ENCODE measurements at regions of chr4 and their contacts with region 1.

Region 1: GRCh38 chr4:986879-987623 is at the start of gene IDUA:
- DNase-seq: peak; percentile 48
- H3K4me3 ChIP-seq: peak within 1 kb of the TSS; percentile 65 to 77 (median 66)
- H3K27ac ChIP-seq: peak within 1 kb of the TSS; percentile 24
- H3K4me1 ChIP-seq: peaks cover 26% of the 10 kb centered on the region
- H3K27me3 ChIP-seq: no peaks in the 10 kb centered on the region
- CTCF ChIP-seq: peak; percentile 2 to 54
- total RNA-seq, gene IDUA: 17.8 to 30.8 TPM

Region 2: GRCh38 chr4:742742-743311 is 244.2 kb before region 1 on chr4:
- CTCF ChIA-PET with region 1: interaction called, 5 read pairs
- dilution Hi-C with region 1: no loop called
- in situ Hi-C with region 1: no loop called
- intact Hi-C with region 1: loop called (anchors 2 kb)
- DNase-seq: peak; percentile 40
- H3K4me3 ChIP-seq: no peak overlapping the region
- H3K27ac ChIP-seq: no peak overlapping the region
- H3K4me1 ChIP-seq: no peaks in the 10 kb centered on the region
- H3K27me3 ChIP-seq: no peaks in the 10 kb centered on the region
- CTCF ChIP-seq: peak; percentile 71 to 88

Region 3: DNA sequence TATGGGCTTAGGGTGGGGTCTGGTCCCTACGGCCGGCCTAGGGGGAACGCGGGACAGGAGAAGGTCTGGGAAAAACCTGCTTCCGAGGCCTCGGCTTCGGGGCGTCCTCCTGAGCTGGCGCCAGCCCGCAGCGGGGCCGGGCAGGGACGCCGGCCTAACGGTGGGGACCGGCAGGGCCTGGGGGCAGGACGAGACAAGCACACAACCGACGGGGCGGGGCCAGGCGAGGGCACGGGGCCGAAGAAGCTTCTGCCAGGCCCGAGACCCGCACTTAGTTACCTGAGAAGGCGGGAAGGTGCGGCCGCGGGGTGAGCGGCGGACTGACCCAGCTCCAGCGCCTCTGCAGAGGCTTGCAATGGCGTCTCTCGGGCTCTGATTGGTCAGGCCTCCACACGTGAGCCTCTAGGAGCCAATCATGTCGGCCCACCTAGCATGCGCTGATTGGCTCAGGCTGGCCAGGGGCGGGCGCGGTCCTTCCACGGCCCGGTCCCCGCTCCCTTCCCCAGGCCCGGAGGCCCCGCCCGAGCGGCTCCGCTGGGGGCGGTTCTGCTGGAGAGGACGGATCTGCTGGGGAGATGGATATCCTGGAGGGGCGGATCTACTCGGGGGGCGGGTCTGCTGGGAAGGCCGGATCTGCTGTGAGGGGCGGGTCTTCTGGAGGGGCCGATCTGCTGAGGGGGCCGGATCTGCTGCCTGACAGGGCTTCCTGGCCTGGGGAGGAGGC is 205.4 kb before region 1 on chr4:
- CTCF ChIA-PET with region 1: interaction called, 5 read pairs
- dilution Hi-C with region 1: no loop called
- in situ Hi-C with region 1: loop called in 1 of 2 experiments (anchors 25 kb)
- intact Hi-C with region 1: no loop called
- DNase-seq: peak; percentile 100
- H3K4me3 ChIP-seq: peak overlapping the region; percentile 77 to 92 (median 91)
- H3K27ac ChIP-seq: peak overlapping the region; percentile 80
- H3K4me1 ChIP-seq: peaks cover 17% of the 10 kb centered on the region
- H3K27me3 ChIP-seq: peaks cover under 1% of the 10 kb centered on the region
- CTCF ChIP-seq: no peak

Region 4: GRCh38 chr4:891747-892146 is 95.3 kb before region 1 on chr4:
- CTCF ChIA-PET with region 1: no interaction called
- dilution Hi-C with region 1: no loop called
- in situ Hi-C with region 1: no loop called
- intact Hi-C with region 1: loop called (anchors 5 kb)
- DNase-seq: no peak
- H3K4me3 ChIP-seq: no peak overlapping the region
- H3K27ac ChIP-seq: no peak overlapping the region
- H3K4me1 ChIP-seq: no peaks in the 10 kb centered on the region
- H3K27me3 ChIP-seq: no peaks in the 10 kb centered on the region
- CTCF ChIP-seq: peak in 1 of 2 donors; percentile 28

Region 5: DNA sequence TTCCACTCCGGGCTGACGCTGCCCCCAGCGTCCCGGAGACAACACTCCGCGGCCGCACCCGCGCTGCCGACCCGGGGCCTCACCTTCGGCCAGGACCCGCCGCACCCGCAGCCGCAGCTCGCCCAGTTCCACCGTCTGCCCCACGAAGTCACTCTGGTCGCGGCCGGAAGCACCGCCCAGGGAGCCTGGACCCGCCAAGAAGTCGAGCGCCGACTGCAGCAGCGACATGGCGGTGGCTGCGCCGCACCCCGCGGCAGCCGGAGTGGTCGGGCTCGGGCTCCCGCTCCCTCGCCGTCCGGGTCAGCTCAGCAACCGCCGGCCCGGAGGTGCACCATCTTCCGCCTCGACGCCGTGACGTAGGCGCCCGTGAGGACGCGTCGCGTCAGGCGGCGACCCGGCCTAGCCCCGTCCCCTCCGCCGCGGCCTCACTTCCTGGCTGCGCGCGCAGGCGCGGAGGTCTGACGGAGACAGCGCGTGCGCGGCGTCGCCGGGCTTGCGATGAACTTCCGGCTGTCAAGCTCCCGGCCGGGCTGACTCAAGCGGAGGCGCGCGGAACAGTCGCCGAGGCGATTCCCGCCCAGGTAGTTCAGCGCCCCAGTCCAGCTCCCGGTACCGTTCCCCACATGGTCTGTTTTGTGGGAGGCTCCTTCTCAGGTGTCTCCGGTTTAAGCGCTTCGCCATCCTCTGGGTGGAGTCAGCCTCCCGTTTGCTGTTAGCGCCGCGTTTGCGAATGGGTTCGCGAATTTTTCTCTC is 54.9 kb before region 1 on chr4 and contains the starts of genes GAK and TMEM175:
- CTCF ChIA-PET with region 1: interaction called, 5 read pairs
- dilution Hi-C with region 1: no loop called
- in situ Hi-C with region 1: no loop called
- intact Hi-C with region 1: loop called (anchors 1 kb)
- DNase-seq: peak; percentile 96
- H3K4me3 ChIP-seq: peak within 1 kb of the TSS; percentile 43 to 98 (median 98)
- H3K27ac ChIP-seq: peak within 1 kb of the TSS; percentile 63
- H3K4me1 ChIP-seq: peaks cover 21% of the 10 kb centered on the region
- H3K27me3 ChIP-seq: no peaks in the 10 kb centered on the region
- CTCF ChIP-seq: no peak
- total RNA-seq, gene GAK: 59.5 to 109 TPM
- total RNA-seq, gene TMEM175: 12.0 to 21.5 TPM

Region 6: GRCh38 chr4:1011022-1011694 is 24.1 kb after region 1 on chr4 and contains the start of gene FGFRL1:
- CTCF ChIA-PET with region 1: no interaction called
- dilution Hi-C with region 1: no loop called
- in situ Hi-C with region 1: no loop called
- intact Hi-C with region 1: loop called (anchors 2 kb)
- DNase-seq: peak; percentile 86
- H3K4me3 ChIP-seq: peak within 1 kb of the TSS; percentile 39 to 49 (median 47)
- H3K27ac ChIP-seq: peak within 1 kb of the TSS; percentile 39
- H3K4me1 ChIP-seq: peaks cover 20% of the 10 kb centered on the region
- H3K27me3 ChIP-seq: peaks cover 3% of the 10 kb centered on the region
- CTCF ChIP-seq: no peak
- total RNA-seq, gene FGFRL1: 12.8 to 15.0 TPM